OCI-LY7 (cell line): ENCODE measurements at regions of chr5 and their contacts with region 1.

Region 1: GRCh38 chr5:126615286-126615685 is 14.5 kb downstream of the PHAX start:
- DNase-seq: peak; percentile 94
- H3K4me3 ChIP-seq: peak overlapping the region; percentile 54
- H3K27ac ChIP-seq: peak overlapping the region; percentile 97
- H3K4me1 ChIP-seq: peaks cover 67% of the 10 kb centered on the region
- CTCF ChIP-seq: peak; percentile 94

Region 2: GRCh38 chr5:124912638-124913328 is 1702.5 kb before region 1 on chr5:
- CTCF ChIA-PET with region 1: no interaction called
- POLR2A ChIA-PET with region 1: no interaction called
- intact Hi-C with region 1: loop called (anchors 10 kb)
- DNase-seq: no peak
- H3K4me3 ChIP-seq: no peak overlapping the region
- H3K27ac ChIP-seq: no peak overlapping the region
- H3K4me1 ChIP-seq: peaks cover 22% of the 10 kb centered on the region
- CTCF ChIP-seq: no peak

Region 3: GRCh38 chr5:126600631-126601511 is 14.4 kb before region 1 on chr5 and contains the start of gene PHAX:
- CTCF ChIA-PET with region 1: no interaction called
- POLR2A ChIA-PET with region 1: interaction called, 41 read pairs
- intact Hi-C with region 1: loop called (anchors 1 kb)
- DNase-seq: peak; percentile 90
- H3K4me3 ChIP-seq: peak within 1 kb of the TSS; percentile 86
- H3K27ac ChIP-seq: peak within 1 kb of the TSS; percentile 97
- H3K4me1 ChIP-seq: peaks cover 36% of the 10 kb centered on the region
- CTCF ChIP-seq: peak; percentile 82
- total RNA-seq, gene PHAX: 73.8 and 89.7 TPM in 2 replicates

Region 4: DNA sequence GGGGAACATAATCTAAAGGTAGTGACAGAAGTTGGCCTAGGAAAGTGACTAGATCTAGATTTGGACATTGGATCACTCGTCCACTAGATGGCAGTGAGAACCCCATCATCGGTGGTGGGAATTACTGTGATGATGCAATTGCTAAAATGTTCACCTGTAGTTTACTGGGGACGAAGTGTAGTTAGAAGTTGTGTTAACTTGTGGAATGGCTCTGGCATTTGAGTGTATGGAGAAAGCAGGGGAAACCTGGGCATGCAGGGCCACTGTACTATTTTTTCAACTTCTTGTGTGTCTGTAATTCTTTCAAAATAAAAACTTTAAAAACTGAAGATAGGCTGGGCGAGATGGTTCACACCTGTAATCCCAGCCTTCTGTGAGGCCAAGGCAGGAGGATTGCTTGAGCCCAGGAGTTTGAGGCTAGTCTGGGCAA is 60.9 kb after region 1 on chr5:
- CTCF ChIA-PET with region 1: no interaction called
- POLR2A ChIA-PET with region 1: no interaction called
- intact Hi-C with region 1: no loop called
- DNase-seq: peak; percentile 82
- H3K4me3 ChIP-seq: no peak overlapping the region
- H3K27ac ChIP-seq: no peak overlapping the region
- H3K4me1 ChIP-seq: peaks cover 15% of the 10 kb centered on the region
- CTCF ChIP-seq: peak; percentile 95